ENCODE measurements at regions of chr1 and their contacts with region 1.

Region 1: DNA sequence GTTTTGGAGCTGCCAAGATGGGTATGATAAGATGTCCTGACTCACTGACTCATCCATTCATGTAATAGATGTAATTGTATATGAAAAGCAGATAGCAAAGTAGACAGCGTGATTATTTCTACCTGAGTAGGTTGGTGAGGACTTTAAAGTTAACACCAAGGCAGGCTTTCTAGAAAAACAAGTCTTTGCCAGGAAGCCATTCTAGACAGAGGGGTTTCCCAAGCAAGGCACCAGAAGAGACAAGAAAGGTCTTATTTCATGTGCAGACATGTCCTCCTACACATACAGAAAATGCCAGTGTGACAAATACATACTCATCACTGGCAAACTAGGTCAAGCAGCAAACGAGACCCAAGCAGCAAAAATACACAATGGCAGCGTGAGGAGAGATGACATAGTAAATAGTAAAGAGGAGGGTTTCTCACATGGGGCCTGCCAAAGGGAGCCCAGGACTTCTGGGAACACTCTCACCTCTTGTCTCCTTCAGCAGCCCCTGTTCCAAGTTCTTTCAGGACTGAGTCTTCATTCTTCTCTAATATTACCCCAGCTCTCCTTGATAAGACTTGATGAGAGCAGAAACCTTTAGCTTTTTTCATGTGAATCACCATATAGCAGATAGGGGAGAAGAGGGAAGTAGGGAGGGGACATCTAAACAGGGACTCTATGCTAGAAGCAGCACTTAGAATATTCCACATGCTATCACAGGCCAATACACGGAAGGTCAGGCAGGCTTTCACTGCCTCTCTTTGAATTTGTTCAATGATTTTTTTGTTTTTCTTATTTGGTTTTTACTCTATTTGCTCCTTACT is 114.6 kb upstream of the ATP1B1 start:
- DNase-seq: peak; percentile 43
- H3K4me3 Mint-ChIP-seq: no peak overlapping the region
- H3K27ac Mint-ChIP-seq: peak overlapping the region; percentile 81
- H3K4me1 Mint-ChIP-seq: peaks cover 20% of the 10 kb centered on the region
- H3K27me3 Mint-ChIP-seq: peaks cover 12% of the 10 kb centered on the region

Region 2: GRCh38 chr1:168225476-168226190 is 766.2 kb before region 1 on chr1 and contains the start of gene SFT2D2:
- CTCF ChIA-PET with region 1: no interaction called
- POLR2A ChIA-PET with region 1: no interaction called
- intact Hi-C with region 1: no loop called
- DNase-seq: peak; percentile 83
- H3K4me3 Mint-ChIP-seq: peak within 1 kb of the TSS; percentile 91
- H3K27ac Mint-ChIP-seq: peak within 1 kb of the TSS; percentile 84
- H3K4me1 Mint-ChIP-seq: peaks cover 43% of the 10 kb centered on the region
- H3K27me3 Mint-ChIP-seq: peaks cover 7% of the 10 kb centered on the region
- total RNA-seq, gene SFT2D2: 52.3 to 52.9 TPM

Region 3: GRCh38 chr1:169012416-169012815 is 20.5 kb after region 1 on chr1:
- CTCF ChIA-PET with region 1: no interaction called
- POLR2A ChIA-PET with region 1: no interaction called
- intact Hi-C with region 1: loop called (anchors 1 kb)
- DNase-seq: no peak
- H3K4me3 Mint-ChIP-seq: no peak overlapping the region
- H3K27ac Mint-ChIP-seq: peak overlapping the region; percentile 23
- H3K4me1 Mint-ChIP-seq: peaks cover 10% of the 10 kb centered on the region
- H3K27me3 Mint-ChIP-seq: no peaks in the 10 kb centered on the region

Region 4: GRCh38 chr1:169049258-169049938 is 57.5 kb after region 1 on chr1:
- CTCF ChIA-PET with region 1: no interaction called
- POLR2A ChIA-PET with region 1: no interaction called
- intact Hi-C with region 1: loop called (anchors 1 kb)
- DNase-seq: peak; percentile 66
- H3K4me3 Mint-ChIP-seq: no peak overlapping the region
- H3K27ac Mint-ChIP-seq: no peak overlapping the region
- H3K4me1 Mint-ChIP-seq: peaks cover 50% of the 10 kb centered on the region
- H3K27me3 Mint-ChIP-seq: no peaks in the 10 kb centered on the region